ENCODE measurements at regions of chr9 and their contacts with region 1.

Region 1: DNA sequence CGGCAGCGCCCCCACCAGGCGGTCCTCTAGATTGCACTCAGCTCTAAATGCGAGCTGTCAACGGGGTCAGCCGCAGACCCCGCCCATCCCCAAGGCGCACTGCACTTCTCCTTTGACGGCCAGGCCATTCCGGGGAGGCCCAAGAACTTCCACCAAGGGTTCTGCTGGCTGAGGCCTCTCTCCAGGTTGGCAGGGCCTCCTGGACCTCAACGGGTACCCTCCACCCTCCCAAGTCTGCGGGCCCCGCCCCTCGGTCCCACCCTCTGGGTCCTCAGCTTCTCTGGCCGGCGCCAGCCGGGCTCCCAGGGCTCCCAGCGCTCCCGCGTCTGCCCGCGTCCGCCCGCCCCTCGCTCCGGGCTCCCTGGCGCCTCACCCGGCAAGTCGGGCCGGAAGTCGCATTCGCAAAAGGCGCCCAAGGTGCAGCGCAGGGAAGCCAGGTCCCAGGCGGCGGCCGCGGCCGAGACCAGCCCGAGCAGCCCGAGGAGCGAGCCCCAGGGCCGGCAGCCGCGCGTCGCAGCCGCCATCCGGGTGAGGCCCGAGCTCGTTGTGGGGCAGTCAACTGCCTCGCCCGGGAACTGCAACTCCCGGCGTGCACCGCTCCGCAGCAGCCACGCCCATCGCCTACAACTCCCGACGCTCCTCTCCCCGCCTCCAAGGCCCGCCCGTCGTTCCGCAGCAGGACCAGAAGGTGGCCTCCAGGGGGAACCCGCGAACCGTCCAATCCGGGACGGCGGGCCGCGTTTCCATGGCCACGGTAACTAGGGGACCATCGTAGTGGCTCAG is at the start of gene TOR2A:
- DNase-seq: peak; percentile 99
- ATAC-seq: peak; percentile 92
- H3K4me3 ChIP-seq: peak within 1 kb of the TSS in 4 of 5 experiments; percentile 45 to 76 (median 64)
- H3K4me3 Mint-ChIP-seq: peak within 1 kb of the TSS; percentile 85
- H3K27ac ChIP-seq: peak within 1 kb of the TSS; percentile 80 to 96
- H3K27ac Mint-ChIP-seq: peak within 1 kb of the TSS; percentile 88
- H3K4me1 ChIP-seq: peaks cover 11 to 16% of the 10 kb centered on the region in 2 donors
- H3K4me1 Mint-ChIP-seq: peaks cover 16% of the 10 kb centered on the region
- H3K27me3 ChIP-seq: no peaks in the 10 kb centered on the region
- H3K27me3 Mint-ChIP-seq: no peaks in the 10 kb centered on the region
- CTCF ChIP-seq: peak; percentile 49
- total RNA-seq, gene TOR2A: 14.3 and 15.8 TPM in 2 replicates

Region 2: GRCh38 chr9:127503947-127504782 is 230.8 kb before region 1 on chr9:
- CTCF ChIA-PET with region 1: interaction called, 15 read pairs
- POLR2A ChIA-PET with region 1: no interaction called
- intact Hi-C with region 1: no loop called
- DNase-seq: peak; percentile 82
- ATAC-seq: peak; percentile 85
- H3K4me3 ChIP-seq: no peak overlapping the region
- H3K4me3 Mint-ChIP-seq: no peak overlapping the region
- H3K27ac ChIP-seq: no peak overlapping the region
- H3K27ac Mint-ChIP-seq: no peak overlapping the region
- H3K4me1 ChIP-seq: no peaks in the 10 kb centered on the region
- H3K4me1 Mint-ChIP-seq: no peaks in the 10 kb centered on the region
- H3K27me3 ChIP-seq: no peaks in the 10 kb centered on the region
- H3K27me3 Mint-ChIP-seq: no peaks in the 10 kb centered on the region
- CTCF ChIP-seq: peak; percentile 79

Region 3: GRCh38 chr9:127586537-127586936 is 148.4 kb before region 1 on chr9:
- CTCF ChIA-PET with region 1: interaction called, 47 read pairs
- POLR2A ChIA-PET with region 1: no interaction called
- intact Hi-C with region 1: loop called (anchors 1 kb)
- DNase-seq: peak; percentile 63
- ATAC-seq: peak; percentile 68
- H3K4me3 ChIP-seq: no peak overlapping the region
- H3K4me3 Mint-ChIP-seq: no peak overlapping the region
- H3K27ac ChIP-seq: no peak overlapping the region
- H3K27ac Mint-ChIP-seq: no peak overlapping the region
- H3K4me1 ChIP-seq: no peaks in the 10 kb centered on the region
- H3K4me1 Mint-ChIP-seq: no peaks in the 10 kb centered on the region
- H3K27me3 ChIP-seq: peaks cover 0 to 24% (median 7%) of the 10 kb centered on the region in 4 experiments
- H3K27me3 Mint-ChIP-seq: peaks cover 37% of the 10 kb centered on the region
- CTCF ChIP-seq: peak; percentile 63

Region 4: GRCh38 chr9:127715394-127716337 is 19.3 kb before region 1 on chr9 and contains the starts of genes PTRH1 and TTC16:
- CTCF ChIA-PET with region 1: interaction called, 26 read pairs
- POLR2A ChIA-PET with region 1: interaction called, 8 read pairs
- intact Hi-C with region 1: loop called (anchors 1 kb)
- DNase-seq: peak; percentile 98
- ATAC-seq: peak; percentile 95
- H3K4me3 ChIP-seq: peak within 1 kb of the TSS; percentile 16 to 90 (median 66)
- H3K4me3 Mint-ChIP-seq: peak within 1 kb of the TSS; percentile 97
- H3K27ac ChIP-seq: peak within 1 kb of the TSS; percentile 35 to 81
- H3K27ac Mint-ChIP-seq: peak within 1 kb of the TSS; percentile 90
- H3K4me1 ChIP-seq: peaks cover 9 to 16% of the 10 kb centered on the region in 2 donors
- H3K4me1 Mint-ChIP-seq: peaks cover 26% of the 10 kb centered on the region
- H3K27me3 ChIP-seq: no peaks in the 10 kb centered on the region
- H3K27me3 Mint-ChIP-seq: no peaks in the 10 kb centered on the region
- CTCF ChIP-seq: no peak
- total RNA-seq, gene PTRH1: 6.2 and 7.6 TPM in 2 replicates
- total RNA-seq, gene TTC16: not detected in 2 replicates

Region 5: GRCh38 chr9:127779136-127779981 is 44.4 kb after region 1 on chr9:
- CTCF ChIA-PET with region 1: interaction called, 38 read pairs
- POLR2A ChIA-PET with region 1: interaction called, 39 read pairs
- intact Hi-C with region 1: no loop called
- DNase-seq: peak; percentile 80
- ATAC-seq: peak; percentile 50
- H3K4me3 ChIP-seq: peak overlapping the region; percentile 24 to 91 (median 69)
- H3K4me3 Mint-ChIP-seq: peak overlapping the region; percentile 100
- H3K27ac ChIP-seq: peak overlapping the region; percentile 89 to 97
- H3K27ac Mint-ChIP-seq: peak overlapping the region; percentile 97
- H3K4me1 ChIP-seq: peaks cover 43 to 82% of the 10 kb centered on the region in 2 donors
- H3K4me1 Mint-ChIP-seq: peaks cover 66% of the 10 kb centered on the region
- H3K27me3 ChIP-seq: no peaks in the 10 kb centered on the region
- H3K27me3 Mint-ChIP-seq: no peaks in the 10 kb centered on the region
- CTCF ChIP-seq: no peak

Region 6: DNA sequence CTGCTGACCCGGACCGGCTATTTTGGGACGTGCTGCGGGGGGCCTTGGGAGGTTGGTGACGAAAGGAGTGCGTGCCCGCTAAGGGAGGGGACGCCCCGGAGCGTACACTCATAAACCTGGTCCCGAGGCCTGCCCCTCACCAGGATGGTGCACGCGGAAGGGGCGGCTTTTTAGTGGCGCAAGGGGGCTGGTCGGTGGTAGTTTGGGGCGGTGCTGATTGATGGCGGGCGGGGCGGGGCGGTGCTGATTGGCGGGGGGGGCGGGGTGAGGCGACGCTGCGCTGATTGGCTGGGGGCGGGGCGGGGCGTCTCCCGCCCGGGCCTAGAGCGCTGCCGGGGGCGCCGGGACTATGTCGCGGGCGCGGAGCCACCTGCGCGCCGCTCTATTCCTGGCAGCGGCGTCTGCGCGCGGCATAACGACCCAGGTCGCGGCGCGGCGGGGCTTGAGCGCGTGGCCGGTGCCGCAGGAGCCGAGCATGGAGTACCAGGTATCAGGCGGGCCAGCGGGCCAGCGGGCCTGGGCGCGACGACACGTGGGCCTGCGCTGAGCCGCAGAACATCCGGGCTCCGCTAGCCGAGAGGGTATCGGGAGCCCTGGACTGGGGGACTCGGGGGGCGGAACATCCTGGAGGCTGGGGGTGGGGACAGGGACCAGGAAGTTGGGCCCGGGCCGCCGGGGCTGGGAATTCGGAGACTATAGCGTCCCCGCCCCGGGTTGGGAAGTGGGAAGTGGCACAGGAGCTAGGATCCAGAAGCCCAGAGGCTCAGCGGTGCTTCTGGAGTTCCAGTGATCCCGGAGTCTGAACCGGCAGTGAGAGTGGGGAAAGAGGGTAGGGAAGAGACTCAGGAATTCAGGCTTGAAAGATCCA is 67.9 kb after region 1 on chr9 and contains the start of gene FPGS:
- CTCF ChIA-PET with region 1: interaction called, 9 read pairs
- POLR2A ChIA-PET with region 1: no interaction called
- intact Hi-C with region 1: loop called (anchors 1 kb)
- DNase-seq: peak; percentile 93
- ATAC-seq: peak; percentile 84
- H3K4me3 ChIP-seq: peak within 1 kb of the TSS; percentile 65 to 96 (median 88)
- H3K4me3 Mint-ChIP-seq: peak within 1 kb of the TSS; percentile 91
- H3K27ac ChIP-seq: peak within 1 kb of the TSS; percentile 68 to 90
- H3K27ac Mint-ChIP-seq: peak within 1 kb of the TSS; percentile 92
- H3K4me1 ChIP-seq: peaks cover 20 to 31% of the 10 kb centered on the region in 2 donors
- H3K4me1 Mint-ChIP-seq: peaks cover 33% of the 10 kb centered on the region
- H3K27me3 ChIP-seq: no peaks in the 10 kb centered on the region
- H3K27me3 Mint-ChIP-seq: no peaks in the 10 kb centered on the region
- CTCF ChIP-seq: no peak
- total RNA-seq, gene FPGS: 136 and 137 TPM in 2 replicates

Region 7: GRCh38 chr9:127937388-127938280 is 202.7 kb after region 1 on chr9 and contains the start of gene DPM2:
- CTCF ChIA-PET with region 1: interaction called, 9 read pairs
- POLR2A ChIA-PET with region 1: no interaction called
- intact Hi-C with region 1: loop called (anchors 1 kb)
- DNase-seq: peak; percentile 93
- ATAC-seq: peak; percentile 90
- H3K4me3 ChIP-seq: peak within 1 kb of the TSS; percentile 69 to 92 (median 79)
- H3K4me3 Mint-ChIP-seq: peak within 1 kb of the TSS; percentile 93
- H3K27ac ChIP-seq: peak within 1 kb of the TSS; percentile 75 to 86
- H3K27ac Mint-ChIP-seq: peak within 1 kb of the TSS; percentile 98
- H3K4me1 ChIP-seq: peaks cover 24 to 30% of the 10 kb centered on the region in 2 donors
- H3K4me1 Mint-ChIP-seq: peaks cover 39% of the 10 kb centered on the region
- H3K27me3 ChIP-seq: no peaks in the 10 kb centered on the region
- H3K27me3 Mint-ChIP-seq: no peaks in the 10 kb centered on the region
- CTCF ChIP-seq: no peak
- total RNA-seq, gene DPM2: 42.9 and 45.9 TPM in 2 replicates

Measured in B cell (primary cell).